Activated B cell treated with CpG ODN at 0.5 μM for 24 hours (primary cell): ENCODE measurements at regions of chr5 and their contacts with region 1.

Region 1: DNA sequence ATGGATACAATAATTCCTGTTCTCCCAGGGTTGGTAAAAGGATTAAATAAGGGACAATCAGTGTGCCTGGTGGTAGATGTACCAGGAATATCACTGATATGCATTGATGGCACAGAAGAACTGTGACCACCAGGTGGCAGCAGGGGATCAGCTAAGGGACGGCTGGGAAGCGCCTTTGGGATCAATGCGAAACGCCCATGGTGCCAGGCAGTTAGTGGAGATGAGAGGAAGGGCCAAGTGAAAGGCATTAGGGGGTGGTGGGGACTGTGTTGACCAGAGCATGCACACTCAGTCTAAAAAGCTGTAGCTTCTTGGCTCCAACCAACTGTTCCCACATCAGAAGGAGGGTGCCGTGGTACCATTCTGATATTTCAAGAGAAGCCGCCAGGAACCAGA is 55.6 kb downstream of the ARHGEF37 start:
- DNase-seq: peak; percentile 55
- ATAC-seq: peak; percentile 70
- H3K4me3 Mint-ChIP-seq: no peak overlapping the region
- H3K27ac Mint-ChIP-seq: no peak overlapping the region
- H3K4me1 Mint-ChIP-seq: peaks cover 5% of the 10 kb centered on the region
- H3K27me3 Mint-ChIP-seq: no peaks in the 10 kb centered on the region
- CTCF ChIP-seq: peak; percentile 94

Region 2: DNA sequence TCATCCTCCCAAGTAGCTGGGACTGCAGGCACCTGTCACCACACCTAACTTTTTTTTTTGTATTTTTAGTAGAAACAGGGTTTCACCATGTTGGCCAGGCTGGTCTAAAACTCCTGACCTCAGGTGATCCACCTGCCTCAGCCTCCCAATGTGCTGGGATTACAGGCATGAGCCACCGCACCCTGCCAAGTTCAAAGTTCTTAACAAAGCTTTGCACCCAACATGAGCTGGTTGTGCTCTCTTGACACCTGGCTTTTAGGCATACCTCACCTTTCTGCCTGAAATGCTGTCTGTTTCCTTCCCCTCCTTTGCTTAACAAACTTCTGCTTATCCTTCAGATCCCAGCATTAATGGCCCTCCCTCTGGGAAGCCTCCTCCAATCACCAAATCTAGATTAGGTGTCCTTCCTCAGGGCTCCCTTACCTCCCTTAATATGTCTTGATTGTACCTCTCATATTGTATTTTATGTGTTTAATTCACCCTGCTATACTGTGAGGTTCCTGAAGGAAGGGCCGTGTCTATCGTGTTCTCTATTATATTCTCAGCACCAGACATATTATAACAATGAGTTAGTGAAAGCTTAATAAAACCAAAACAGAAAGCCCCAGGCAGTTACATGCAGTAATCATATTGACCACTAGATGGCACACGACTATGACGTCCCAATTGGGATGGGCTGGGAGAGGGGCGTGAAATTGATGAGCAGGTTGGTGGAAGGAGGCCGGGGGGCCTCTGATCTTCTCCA is 30.4 kb after region 1 on chr5:
- CTCF ChIA-PET with region 1: interaction called, 17 read pairs
- POLR2A ChIA-PET with region 1: no interaction called
- intact Hi-C with region 1: loop called (anchors 1 kb)
- DNase-seq: no peak
- ATAC-seq: peak; percentile 50
- H3K4me3 Mint-ChIP-seq: no peak overlapping the region
- H3K27ac Mint-ChIP-seq: no peak overlapping the region
- H3K4me1 Mint-ChIP-seq: peaks cover 5% of the 10 kb centered on the region
- H3K27me3 Mint-ChIP-seq: no peaks in the 10 kb centered on the region
- CTCF ChIP-seq: peak; percentile 94

Region 3: DNA sequence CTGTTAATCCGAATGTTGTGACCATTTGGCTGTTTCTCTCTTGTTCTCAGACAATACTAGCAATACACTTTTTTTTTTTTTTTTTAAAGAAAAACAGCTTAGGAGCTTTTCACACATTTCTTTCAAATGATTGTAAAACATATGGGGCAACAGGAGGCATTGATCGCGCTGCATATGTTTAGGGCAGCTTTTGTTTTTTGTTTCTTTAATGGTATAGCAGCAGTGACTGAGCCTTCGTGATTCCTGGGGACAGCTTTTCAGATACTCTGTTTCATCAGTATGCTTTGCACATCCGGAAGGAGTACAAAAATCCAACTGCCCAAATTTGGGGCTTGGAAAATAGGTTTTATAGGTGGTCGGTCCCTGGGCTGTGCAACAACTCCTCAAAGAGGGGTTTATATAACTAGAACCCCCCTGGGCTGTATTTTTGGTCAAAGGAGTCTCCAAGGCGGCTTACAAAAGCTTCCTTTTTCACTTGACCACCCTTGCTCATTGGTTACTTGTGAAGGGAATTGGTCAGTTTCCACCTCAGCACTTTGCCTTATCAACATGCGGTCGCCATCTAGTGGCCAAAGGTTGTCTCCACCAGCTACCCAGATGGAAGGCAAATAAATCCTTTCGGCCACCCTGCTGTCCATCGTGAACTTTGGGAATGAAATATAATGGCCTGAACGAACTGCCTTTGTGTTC is 215.9 kb after region 1 on chr5:
- CTCF ChIA-PET with region 1: interaction called, 43 read pairs
- POLR2A ChIA-PET with region 1: no interaction called
- intact Hi-C with region 1: loop called (anchors 1 kb)
- DNase-seq: peak; percentile 29
- ATAC-seq: peak; percentile 25
- H3K4me3 Mint-ChIP-seq: no peak overlapping the region
- H3K27ac Mint-ChIP-seq: no peak overlapping the region
- H3K4me1 Mint-ChIP-seq: no peaks in the 10 kb centered on the region
- H3K27me3 Mint-ChIP-seq: no peaks in the 10 kb centered on the region
- CTCF ChIP-seq: peak; percentile 20

Region 4: GRCh38 chr5:149990518-149991376 is 353.9 kb after region 1 on chr5:
- CTCF ChIA-PET with region 1: interaction called, 26 read pairs
- POLR2A ChIA-PET with region 1: no interaction called
- intact Hi-C with region 1: loop called (anchors 1 kb)
- DNase-seq: peak; percentile 34
- ATAC-seq: peak; percentile 99
- H3K4me3 Mint-ChIP-seq: no peak overlapping the region
- H3K27ac Mint-ChIP-seq: no peak overlapping the region
- H3K4me1 Mint-ChIP-seq: no peaks in the 10 kb centered on the region
- H3K27me3 Mint-ChIP-seq: no peaks in the 10 kb centered on the region
- CTCF ChIP-seq: peak; percentile 95

Region 5: DNA sequence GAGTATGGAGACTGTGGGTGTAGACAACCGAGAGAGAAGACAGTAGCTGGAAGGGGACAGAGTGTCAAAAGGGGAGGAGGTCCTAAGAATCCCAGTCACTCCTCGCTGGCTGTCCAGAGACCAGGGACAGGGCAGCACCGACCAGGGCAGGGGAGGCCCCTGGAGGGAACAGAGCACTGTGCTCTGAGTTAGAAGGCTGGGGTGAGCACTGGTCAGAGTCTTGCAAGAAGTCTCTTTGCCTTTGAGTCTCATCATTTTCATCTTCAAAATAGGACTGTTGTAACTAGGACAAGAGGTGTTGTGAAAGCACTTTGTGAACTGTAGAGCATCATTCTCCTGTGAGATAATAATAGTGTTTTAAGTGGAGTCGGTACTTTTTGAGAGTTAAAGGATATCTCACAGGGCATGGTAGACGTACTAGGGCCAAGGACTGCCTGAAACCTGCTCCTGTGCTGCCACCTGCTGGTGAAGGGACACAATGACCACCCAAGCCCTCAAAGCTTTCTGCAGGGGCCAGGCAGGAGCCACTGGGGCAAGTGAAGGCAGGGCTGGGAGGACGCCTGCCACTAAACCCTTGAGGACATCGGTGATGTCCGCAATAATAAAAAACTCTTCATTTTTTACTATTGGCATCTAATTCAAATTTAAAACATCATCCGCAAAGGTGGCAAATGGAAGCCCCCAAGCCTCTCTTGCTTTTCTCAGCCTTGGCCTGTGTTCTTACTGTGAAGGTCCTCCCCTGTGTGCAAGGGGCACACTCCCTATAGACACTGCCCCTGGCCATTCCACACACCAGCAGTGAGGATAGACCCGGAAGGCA is 581.2 kb after region 1 on chr5:
- CTCF ChIA-PET with region 1: interaction called, 3 read pairs
- POLR2A ChIA-PET with region 1: no interaction called
- intact Hi-C with region 1: loop called (anchors 1 kb)
- DNase-seq: peak; percentile 66
- ATAC-seq: peak; percentile 96
- H3K4me3 Mint-ChIP-seq: no peak overlapping the region
- H3K27ac Mint-ChIP-seq: no peak overlapping the region
- H3K4me1 Mint-ChIP-seq: peaks cover 1% of the 10 kb centered on the region
- H3K27me3 Mint-ChIP-seq: peaks cover 15% of the 10 kb centered on the region
- CTCF ChIP-seq: no peak